Sciatic nerve (tissue), 2 donors: ENCODE measurements at regions of chr12 and their contacts with region 1.

Region 1: GRCh38 chr12:60021235-60021634 is 425.4 kb downstream of the SLC16A7 start:
- DNase-seq: no peak
- ATAC-seq: no peak

Region 2: GRCh38 chr12:59452259-59452658 is 569.0 kb before region 1 on chr12:
- intact Hi-C with region 1: loop called (anchors 5 kb)
- DNase-seq: no peak
- ATAC-seq: peak; percentile 72